Activated CD4-positive, alpha-beta T cell treated with anti-CD3 and anti-CD28 coated beads, Interleukin-2, amount 10 ng/mL, durations not matched to agents 24 days and 14 days (primary cell): ENCODE measurements at regions of chr19 and their contacts with region 1.

Region 1: GRCh38 chr19:21396893-21397572 is at the start of gene ZNF493:
- DNase-seq: peak; percentile 96
- H3K4me3 Mint-ChIP-seq: peak within 1 kb of the TSS; percentile 93
- H3K27ac Mint-ChIP-seq: peak within 1 kb of the TSS; percentile 85
- H3K4me1 Mint-ChIP-seq: peaks cover 8% of the 10 kb centered on the region
- H3K27me3 Mint-ChIP-seq: no peaks in the 10 kb centered on the region
- total RNA-seq, gene ZNF493: 12.2 and 12.5 TPM in 2 replicates

Region 2: DNA sequence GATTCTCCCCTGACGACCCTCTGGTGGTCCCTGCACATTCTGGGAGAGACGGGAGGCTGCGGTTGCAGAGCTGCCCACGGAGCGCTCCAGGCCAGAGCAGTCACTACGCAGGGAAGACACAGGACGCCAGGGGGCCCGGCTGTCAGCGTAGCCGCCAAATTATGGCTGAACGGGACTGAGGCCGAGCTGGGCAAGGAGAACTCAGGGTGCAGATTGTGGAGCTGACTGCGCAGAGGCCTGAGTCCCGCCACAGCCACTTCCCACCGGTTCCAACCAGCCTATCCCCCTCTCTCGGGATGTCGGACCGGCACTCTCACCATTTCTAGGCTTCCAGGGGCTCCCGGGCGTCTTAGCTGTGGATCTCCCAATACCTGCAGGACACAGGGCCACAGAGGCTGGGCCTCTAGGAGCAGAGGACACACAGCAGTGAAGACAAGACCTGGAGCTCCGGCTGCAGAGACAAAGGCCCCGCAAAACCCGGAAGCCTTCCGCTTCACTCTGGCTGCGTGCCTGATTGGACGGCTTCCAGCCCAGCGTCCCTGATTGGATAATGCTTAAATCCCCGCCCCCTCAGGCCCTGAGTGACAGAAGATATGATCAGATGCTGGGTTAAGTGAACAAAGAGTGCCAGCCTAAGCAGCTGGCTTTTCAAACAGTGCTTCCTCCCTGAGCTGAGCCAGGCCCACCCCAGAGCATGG is 831.6 kb before region 1 on chr19 and contains the start of gene ZNF737:
- intact Hi-C with region 1: loop called (anchors 2 kb)
- DNase-seq: peak; percentile 96
- H3K4me3 Mint-ChIP-seq: peak within 1 kb of the TSS; percentile 99
- H3K27ac Mint-ChIP-seq: peak within 1 kb of the TSS; percentile 98
- H3K4me1 Mint-ChIP-seq: peaks cover 7% of the 10 kb centered on the region
- H3K27me3 Mint-ChIP-seq: no peaks in the 10 kb centered on the region
- total RNA-seq, gene ZNF737: 7.2 and 8.5 TPM in 2 replicates

Region 3: DNA sequence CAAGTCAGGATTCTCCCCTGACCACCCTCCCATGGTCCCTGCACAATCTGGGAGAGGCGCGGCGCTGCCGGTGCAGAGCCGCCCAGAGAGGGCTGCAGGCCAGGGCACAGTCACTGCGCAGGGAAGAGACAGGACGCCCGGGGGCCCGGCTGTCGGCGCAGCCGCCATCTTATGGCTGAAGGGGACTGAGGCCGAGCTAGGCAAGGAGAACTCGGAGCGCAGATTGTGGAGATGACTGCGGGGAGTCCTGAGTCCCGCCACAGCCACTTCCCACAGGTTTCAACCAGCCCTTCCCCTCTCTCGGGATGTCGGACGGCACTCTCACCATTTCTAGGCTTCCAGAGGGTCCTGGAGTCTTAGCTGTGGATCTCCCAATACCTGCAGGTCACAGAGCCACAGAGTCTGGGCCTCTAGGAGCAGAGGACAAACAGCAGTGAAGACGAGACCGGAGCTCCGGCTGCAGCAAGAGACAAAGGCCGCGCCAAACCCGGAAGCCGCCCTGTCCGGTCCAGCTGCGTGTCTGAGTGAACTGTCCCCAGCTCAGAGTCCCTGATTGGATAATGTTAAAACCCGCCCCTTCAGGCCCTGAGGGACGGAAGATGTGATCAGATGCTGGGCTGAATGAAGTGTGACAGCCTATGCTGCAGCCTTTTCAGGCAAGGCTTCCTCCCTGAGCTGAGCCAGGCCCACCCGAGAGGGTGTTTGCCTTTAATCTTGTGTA is 68.0 kb before region 1 on chr19 and contains the start of gene ZNF708:
- intact Hi-C with region 1: loop called (anchors 1 kb)
- DNase-seq: peak; percentile 94
- H3K4me3 Mint-ChIP-seq: peak within 1 kb of the TSS; percentile 94
- H3K27ac Mint-ChIP-seq: peak within 1 kb of the TSS; percentile 100
- H3K4me1 Mint-ChIP-seq: peaks cover 17% of the 10 kb centered on the region
- H3K27me3 Mint-ChIP-seq: no peaks in the 10 kb centered on the region
- total RNA-seq, gene ZNF708: 10.1 TPM in 2 replicates

Region 4: DNA sequence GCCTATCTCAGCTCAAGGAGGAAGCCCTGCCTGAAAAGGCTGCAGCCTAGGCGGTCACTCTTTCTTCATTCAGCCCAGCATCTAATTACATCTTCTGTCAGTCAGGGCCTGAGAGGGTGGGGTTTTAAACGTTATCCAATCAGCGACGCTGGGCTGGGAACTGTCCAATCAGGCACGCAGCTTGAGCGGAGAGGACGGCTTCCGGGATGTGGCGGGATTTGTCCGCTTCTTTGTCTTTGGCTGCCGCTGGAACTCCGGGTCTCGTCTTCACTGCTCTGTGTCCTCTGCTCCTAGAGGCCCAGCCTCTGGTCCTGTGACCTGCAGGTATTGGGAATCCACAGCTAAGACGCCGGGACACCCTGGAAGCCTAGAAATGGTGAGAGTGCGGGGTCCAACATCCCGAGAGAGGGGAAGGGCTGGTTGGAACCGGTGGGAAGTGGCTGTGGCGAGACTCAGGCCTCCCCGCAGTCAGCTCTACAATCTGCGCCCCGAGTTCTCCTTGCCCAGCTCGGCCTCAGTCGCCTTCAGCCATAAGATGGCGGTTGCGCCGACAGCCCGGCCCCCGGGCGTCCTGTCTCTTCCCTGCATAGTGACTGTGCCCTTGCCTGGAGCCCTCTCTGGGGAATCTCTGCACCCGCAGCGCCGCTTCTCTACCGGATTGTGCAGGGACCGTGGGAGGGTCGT is 38.1 kb before region 1 on chr19 and contains the start of gene ZNF738:
- intact Hi-C with region 1: loop called (anchors 2 kb)
- DNase-seq: peak; percentile 94
- H3K4me3 Mint-ChIP-seq: peak within 1 kb of the TSS; percentile 98
- H3K27ac Mint-ChIP-seq: peak within 1 kb of the TSS; percentile 95
- H3K4me1 Mint-ChIP-seq: peaks cover 12% of the 10 kb centered on the region
- H3K27me3 Mint-ChIP-seq: no peaks in the 10 kb centered on the region
- total RNA-seq, gene ZNF738: 11.5 and 11.8 TPM in 2 replicates

Region 5: GRCh38 chr19:21383980-21384582 is 13.0 kb before region 1 on chr19:
- intact Hi-C with region 1: no loop called
- DNase-seq: no peak
- H3K4me3 Mint-ChIP-seq: no peak overlapping the region
- H3K27ac Mint-ChIP-seq: no peak overlapping the region
- H3K4me1 Mint-ChIP-seq: no peaks in the 10 kb centered on the region
- H3K27me3 Mint-ChIP-seq: no peaks in the 10 kb centered on the region